H1 (cell line): ENCODE measurements at regions of chr22 and their contacts with region 1.

Region 1: DNA sequence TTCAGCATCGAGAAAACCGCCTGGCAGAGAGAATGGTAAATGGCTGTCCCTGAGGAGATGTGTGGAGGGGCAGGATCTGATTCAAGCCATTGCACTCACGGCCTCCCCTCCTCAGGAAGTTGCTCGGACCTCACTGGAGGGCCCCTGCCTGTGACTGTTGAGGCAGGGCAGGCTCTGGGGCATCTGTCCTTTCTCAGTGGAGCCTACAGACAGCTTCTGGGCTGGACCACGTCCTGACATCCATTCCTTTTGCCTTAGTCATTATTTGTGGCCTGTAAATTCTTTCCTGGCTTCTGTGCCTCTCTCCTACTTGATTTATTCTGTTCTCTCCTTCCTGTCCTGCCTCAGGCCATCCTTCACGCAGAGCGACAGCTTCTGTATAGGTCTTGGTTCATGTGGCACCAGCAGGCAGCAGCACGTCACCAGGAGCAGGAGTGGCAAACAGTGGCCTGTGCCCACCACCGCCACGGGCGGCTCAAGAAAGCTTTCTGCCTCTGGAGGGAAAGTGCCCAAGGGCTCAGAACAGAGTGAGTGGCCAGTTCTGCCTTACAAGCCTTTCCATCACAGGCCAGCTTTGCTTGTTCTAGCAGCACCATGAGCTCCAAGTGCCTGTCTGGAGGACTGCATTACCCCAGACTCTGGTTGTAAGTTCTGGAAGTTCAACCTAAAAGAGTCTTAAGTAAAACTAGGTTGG is 59.6 kb downstream of the PISD start:
- DNase-seq: no peak
- H3K4me3 ChIP-seq: no peak overlapping the region
- H3K27ac ChIP-seq: no peak overlapping the region
- H3K4me1 ChIP-seq: no peaks in the 10 kb centered on the region
- H3K27me3 ChIP-seq: no peaks in the 10 kb centered on the region
- CTCF ChIP-seq: no peak
- EP300 ChIP-seq: no peak
- POLR2A ChIP-seq: no peak
- RAD21 ChIP-seq: no peak

Region 2: DNA sequence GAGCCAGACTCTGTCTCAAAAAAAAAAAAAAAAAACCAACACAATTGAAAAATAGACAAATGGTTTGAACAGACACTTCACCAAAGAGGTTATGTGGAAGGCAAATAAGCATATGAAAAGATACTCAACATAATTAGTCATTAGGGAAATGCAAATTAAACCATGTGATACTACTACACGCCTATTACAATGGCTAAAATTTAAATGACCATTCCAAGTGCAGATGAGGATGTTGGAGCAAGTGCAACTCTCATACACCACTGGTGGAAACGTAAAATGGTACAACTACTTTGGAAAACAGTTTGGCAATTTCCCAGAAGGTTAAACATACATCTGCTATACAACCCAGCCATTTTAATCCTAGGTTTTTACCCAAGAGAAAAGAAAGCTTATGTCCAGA is 137.1 kb before region 1 on chr22:
- CTCF ChIA-PET with region 1: no interaction called
- POLR2A ChIA-PET with region 1: no interaction called
- DNase-seq: no peak
- H3K4me3 ChIP-seq: no peak overlapping the region
- H3K27ac ChIP-seq: no peak overlapping the region
- H3K4me1 ChIP-seq: no peaks in the 10 kb centered on the region
- H3K27me3 ChIP-seq: no peaks in the 10 kb centered on the region
- CTCF ChIP-seq: no peak
- EP300 ChIP-seq: no peak
- POLR2A ChIP-seq: no peak
- RAD21 ChIP-seq: no peak

Region 3: GRCh38 chr22:31630331-31631329 is 28.2 kb after region 1 on chr22:
- CTCF ChIA-PET with region 1: interaction called, 13 read pairs
- POLR2A ChIA-PET with region 1: interaction called, 5 read pairs
- DNase-seq: peak; percentile 53 to 88
- H3K4me3 ChIP-seq: peak overlapping the region; percentile 58 to 97 (median 60)
- H3K27ac ChIP-seq: no peak overlapping the region
- H3K4me1 ChIP-seq: peaks cover 5 to 31% (median 23%) of the 10 kb centered on the region in 4 experiments
- H3K27me3 ChIP-seq: no peaks in the 10 kb centered on the region
- CTCF ChIP-seq: no peak
- EP300 ChIP-seq: no peak
- POLR2A ChIP-seq: no peak; a peak in 1 of 3 replicates
- RAD21 ChIP-seq: no peak